MCF 10A (cell line): ENCODE measurements at regions of chr1 and their contacts with region 1.

Region 1: DNA sequence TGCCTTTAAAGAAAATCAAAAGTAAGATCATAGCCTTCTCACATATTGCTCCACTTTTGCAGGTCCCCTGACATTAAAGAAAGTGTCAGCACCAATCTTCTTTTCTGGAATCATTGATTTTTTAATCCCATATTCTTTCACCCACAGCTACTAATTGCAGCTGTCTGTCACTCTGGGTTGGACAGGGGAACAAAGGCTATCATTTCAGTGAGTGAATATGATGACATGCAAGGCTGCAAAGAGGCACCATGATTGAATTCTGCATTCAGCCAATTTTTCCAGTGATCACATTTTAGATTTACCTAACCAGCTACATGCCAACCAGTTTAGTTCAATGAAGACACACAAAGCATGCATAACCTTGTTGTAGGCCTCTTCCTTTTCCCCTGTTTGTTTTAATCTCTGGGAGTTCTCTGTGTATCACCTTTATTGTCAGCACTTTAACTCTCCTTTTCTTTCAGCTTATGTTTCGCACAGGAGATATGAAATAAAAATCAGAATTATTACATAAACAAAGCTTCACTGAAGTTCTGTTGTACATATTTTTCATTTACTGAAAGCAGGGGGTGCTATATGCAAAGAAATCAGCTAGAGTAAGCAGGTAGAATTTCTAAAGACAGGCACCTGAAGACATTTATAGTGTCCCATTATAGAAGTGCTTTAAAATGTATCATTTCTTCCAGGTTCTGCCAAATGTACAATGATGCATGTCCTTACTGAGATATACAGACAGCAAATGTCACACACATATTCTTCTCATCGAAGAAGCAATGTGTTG is 584.8 kb downstream of the PLA2G4A start:
- DNase-seq: peak; percentile 45
- H3K4me3 Mint-ChIP-seq: no peak overlapping the region
- H3K27ac Mint-ChIP-seq: no peak overlapping the region
- H3K4me1 Mint-ChIP-seq: peaks cover 18% of the 10 kb centered on the region
- H3K27me3 Mint-ChIP-seq: no peaks in the 10 kb centered on the region
- CTCF ChIP-seq: peak; percentile 53

Region 2: GRCh38 chr1:187999973-188000372 is 586.4 kb after region 1 on chr1:
- CTCF ChIA-PET with region 1: interaction called, 3 read pairs
- POLR2A ChIA-PET with region 1: interaction called, 3 read pairs
- intact Hi-C with region 1: loop called (anchors 10 kb)
- DNase-seq: peak; percentile 8
- H3K4me3 Mint-ChIP-seq: no peak overlapping the region
- H3K27ac Mint-ChIP-seq: no peak overlapping the region
- H3K4me1 Mint-ChIP-seq: no peaks in the 10 kb centered on the region
- H3K27me3 Mint-ChIP-seq: no peaks in the 10 kb centered on the region
- CTCF ChIP-seq: peak; percentile 14

Region 3: GRCh38 chr1:188128761-188129160 is 715.2 kb after region 1 on chr1:
- CTCF ChIA-PET with region 1: interaction called, 3 read pairs
- POLR2A ChIA-PET with region 1: no interaction called
- intact Hi-C with region 1: loop called (anchors 10 kb)
- DNase-seq: peak; percentile 27
- H3K4me3 Mint-ChIP-seq: no peak overlapping the region
- H3K27ac Mint-ChIP-seq: no peak overlapping the region
- H3K4me1 Mint-ChIP-seq: no peaks in the 10 kb centered on the region
- H3K27me3 Mint-ChIP-seq: no peaks in the 10 kb centered on the region
- CTCF ChIP-seq: no peak

Region 4: GRCh38 chr1:188937965-188938551 is 1524.5 kb after region 1 on chr1:
- CTCF ChIA-PET with region 1: interaction called, 4 read pairs
- POLR2A ChIA-PET with region 1: no interaction called
- intact Hi-C with region 1: loop called (anchors 1 kb)
- DNase-seq: peak; percentile 43
- H3K4me3 Mint-ChIP-seq: no peak overlapping the region
- H3K27ac Mint-ChIP-seq: no peak overlapping the region
- H3K4me1 Mint-ChIP-seq: no peaks in the 10 kb centered on the region
- H3K27me3 Mint-ChIP-seq: no peaks in the 10 kb centered on the region
- CTCF ChIP-seq: peak; percentile 46